ENCODE measurements at regions of chr15 and their contacts with region 1.

Region 1: DNA sequence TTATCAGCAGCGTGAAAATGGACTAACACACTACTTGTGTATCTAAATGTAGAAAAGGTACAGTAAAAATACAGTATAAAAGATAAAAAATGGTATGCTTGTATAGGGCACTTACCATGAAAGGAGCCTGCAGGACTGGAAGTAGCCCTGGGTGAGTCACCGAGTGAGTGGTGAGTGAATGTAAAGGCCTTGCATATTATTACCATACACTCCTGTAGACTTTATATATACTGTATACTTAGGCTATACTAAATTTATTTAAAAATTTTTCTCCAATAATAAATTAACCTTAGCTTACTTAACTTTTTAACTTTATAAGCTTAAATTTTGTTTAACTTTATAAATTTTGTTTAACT is 67.2 kb upstream of the TSPAN3 start:
- DNase-seq: no peak
- H3K4me3 ChIP-seq: no peak overlapping the region
- CTCF ChIP-seq: no peak

Region 2: DNA sequence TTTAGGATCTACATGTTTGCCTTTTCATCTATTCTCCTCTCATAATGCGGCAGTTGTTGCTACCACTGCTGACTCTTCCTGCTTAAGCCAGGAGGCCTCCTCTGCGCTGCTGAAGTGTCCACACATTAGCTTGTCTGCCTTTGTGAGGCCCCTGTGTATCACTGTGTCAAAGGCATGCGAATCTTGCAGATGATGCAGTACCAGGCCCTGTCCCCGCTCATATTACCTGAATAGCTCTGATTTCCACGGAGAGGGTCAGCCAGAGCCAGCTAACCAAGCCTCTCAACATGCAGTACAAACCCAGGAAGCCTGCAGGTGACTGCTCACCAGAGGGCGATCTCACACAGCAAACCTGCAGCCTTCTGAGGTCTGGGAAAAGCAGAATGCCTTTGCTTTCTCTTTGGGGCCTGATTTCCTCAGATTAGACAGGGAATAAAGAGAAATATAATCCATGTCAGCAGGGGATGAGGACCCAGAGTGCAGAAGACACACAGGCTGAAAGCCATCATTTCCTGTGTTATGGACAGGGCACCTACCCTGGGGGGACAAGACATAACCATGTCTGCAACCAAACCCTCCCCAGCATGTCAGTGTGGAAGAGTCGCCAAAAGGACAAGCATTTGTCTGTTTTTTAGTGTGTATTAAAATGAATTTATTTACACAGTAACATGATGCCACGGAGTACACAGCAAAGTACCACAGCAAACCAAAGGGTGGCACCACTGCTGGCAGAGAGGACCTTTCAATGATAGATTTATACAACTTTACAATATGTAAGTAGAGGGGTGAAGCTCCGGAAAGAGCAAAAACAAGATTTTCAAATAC is 30.4 kb before region 1 on chr15:
- in situ Hi-C with region 1: no loop called
- DNase-seq: peak; percentile 46
- H3K4me3 ChIP-seq: no peak overlapping the region
- CTCF ChIP-seq: peak; percentile 85

Region 3: DNA sequence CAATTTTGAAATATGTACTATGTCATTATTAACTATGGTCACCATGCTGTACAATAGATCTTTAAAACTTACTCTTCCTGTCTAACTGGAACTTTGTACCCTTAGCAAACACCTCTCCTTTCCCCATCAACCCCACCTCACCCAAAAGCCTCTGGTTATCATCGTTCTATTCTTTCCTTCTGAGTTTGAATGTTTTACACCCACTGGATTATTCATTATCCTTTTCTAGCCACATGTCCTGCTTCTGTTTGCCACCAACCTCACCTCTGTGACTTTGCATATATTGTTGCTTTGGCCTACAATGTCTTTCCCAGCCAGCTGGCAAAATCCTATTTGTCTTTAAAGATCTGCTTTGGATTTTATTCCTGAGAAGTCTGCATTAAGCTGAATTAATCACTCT is 35.3 kb after region 1 on chr15:
- in situ Hi-C with region 1: loop called (anchors 5 kb)
- DNase-seq: no peak
- H3K4me3 ChIP-seq: no peak overlapping the region
- CTCF ChIP-seq: no peak